Activated T-helper 2 cell treated with anti-CD3 and anti-CD28 coated beads, Interferon-gamma antibody, Interleukin-2, Interleukin-4, amounts not matched to agents 10 μg/mL and 5 μg/mL and 100 μg/mL, durations not matched to agents 14 hours and 24 hours and 36 hours (primary cell): ENCODE measurements at regions of chr5 and their contacts with region 1.

Region 1: GRCh38 chr5:142821733-142822487 is 51.7 kb downstream of the ARHGAP26 start:
- DNase-seq: no peak
- H3K4me3 Mint-ChIP-seq: no peak overlapping the region
- H3K27ac Mint-ChIP-seq: peak overlapping the region; percentile 72
- H3K4me1 Mint-ChIP-seq: peaks cover 69% of the 10 kb centered on the region
- H3K27me3 Mint-ChIP-seq: no peaks in the 10 kb centered on the region

Region 2: DNA sequence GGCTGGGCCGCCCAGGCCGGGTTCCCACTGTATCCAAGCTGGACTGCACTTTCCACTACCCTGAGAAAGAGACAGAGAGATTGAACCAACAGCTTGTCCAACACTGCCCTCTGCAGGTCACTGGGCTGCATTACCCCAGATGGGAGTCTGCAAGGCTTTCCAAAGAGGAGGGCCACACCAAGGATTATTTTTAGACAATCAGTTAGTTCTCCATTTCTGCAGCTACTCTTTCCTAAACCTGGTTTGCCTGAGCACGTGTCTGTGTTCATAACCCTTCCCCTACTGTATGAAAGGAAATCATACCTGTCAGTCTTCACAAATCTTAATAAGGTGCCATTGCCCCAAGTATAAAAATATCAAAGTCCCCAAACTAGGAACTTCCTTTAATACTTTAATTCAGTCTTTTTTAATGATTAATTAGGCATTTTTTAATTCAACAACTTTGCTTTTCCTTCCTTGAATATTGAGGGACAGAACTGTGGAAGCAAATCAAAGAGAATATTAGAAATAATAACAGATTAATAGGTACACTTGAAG is 122.7 kb before region 1 on chr5:
- intact Hi-C with region 1: no loop called
- DNase-seq: peak; percentile 60
- H3K4me3 Mint-ChIP-seq: no peak overlapping the region
- H3K27ac Mint-ChIP-seq: no peak overlapping the region
- H3K4me1 Mint-ChIP-seq: peaks cover 3% of the 10 kb centered on the region
- H3K27me3 Mint-ChIP-seq: peaks cover 14% of the 10 kb centered on the region

Region 3: DNA sequence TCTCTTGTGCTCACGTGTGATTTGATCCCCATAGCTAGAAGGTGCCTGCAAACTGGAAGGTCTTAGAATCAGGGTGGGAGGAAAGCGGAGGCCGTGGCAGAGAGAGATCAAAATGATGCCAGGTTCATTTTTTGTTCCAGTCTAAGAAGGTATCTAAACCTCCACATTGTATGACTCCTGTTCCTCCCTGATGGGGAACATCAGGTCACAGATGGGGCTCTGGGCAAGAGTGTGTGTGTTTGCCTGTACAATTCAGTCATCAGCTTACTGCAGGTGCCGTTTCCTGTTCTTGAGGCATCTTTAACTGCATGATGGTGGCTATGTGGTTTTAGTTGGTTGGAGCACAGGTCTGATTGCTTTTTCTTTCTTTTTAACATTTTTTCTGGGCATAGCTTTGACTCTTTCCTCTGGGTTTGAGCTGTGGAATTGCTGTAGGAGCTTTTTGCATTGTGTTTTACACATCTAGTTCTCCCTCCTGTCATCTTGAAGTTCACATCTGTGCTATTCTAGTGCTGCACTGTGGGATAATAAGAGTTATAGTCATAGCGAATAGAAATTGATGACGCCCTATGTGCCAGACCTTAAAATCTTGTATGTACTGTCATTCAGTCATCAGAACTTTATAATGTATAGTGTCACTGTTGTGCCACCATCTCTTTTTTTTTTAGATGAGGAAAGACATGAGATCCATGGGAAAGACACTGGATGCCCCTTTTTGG is 21.0 kb before region 1 on chr5:
- intact Hi-C with region 1: loop called (anchors 1 kb)
- DNase-seq: peak; percentile 55
- H3K4me3 Mint-ChIP-seq: peak overlapping the region; percentile 64
- H3K27ac Mint-ChIP-seq: peak overlapping the region; percentile 92
- H3K4me1 Mint-ChIP-seq: peaks cover 56% of the 10 kb centered on the region
- H3K27me3 Mint-ChIP-seq: no peaks in the 10 kb centered on the region

Region 4: GRCh38 chr5:142865414-142866045 is 43.6 kb after region 1 on chr5:
- intact Hi-C with region 1: loop called (anchors 2 kb)
- DNase-seq: no peak
- H3K4me3 Mint-ChIP-seq: no peak overlapping the region
- H3K27ac Mint-ChIP-seq: no peak overlapping the region
- H3K4me1 Mint-ChIP-seq: peaks cover 33% of the 10 kb centered on the region
- H3K27me3 Mint-ChIP-seq: no peaks in the 10 kb centered on the region